Heart left ventricle (tissue), 16 donors: ENCODE measurements at regions of chr11 and their contacts with region 1.

Region 1: DNA sequence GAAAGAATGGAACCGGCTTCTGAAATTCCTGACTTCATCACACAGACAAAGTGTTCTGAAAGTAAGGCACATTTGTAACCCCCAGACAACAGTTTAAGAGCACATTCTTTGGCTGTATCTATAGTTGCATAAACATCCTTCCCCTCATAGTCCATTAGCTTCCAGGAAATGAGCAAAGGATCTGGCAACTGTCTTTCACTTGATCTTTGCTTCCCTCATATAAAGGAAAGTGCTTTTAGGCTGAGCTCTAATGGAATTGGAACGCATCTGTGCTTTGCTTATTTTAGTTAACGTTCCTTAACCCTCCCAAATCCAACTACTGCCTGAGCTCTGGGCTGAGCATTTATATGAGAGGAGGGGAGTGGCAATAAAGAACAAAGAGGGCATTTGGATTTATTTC is 76.9 kb upstream of the API5 start:
- DNase-seq: no peak
- ATAC-seq: no peak
- H3K4me3 ChIP-seq: no peak overlapping the region
- H3K27ac ChIP-seq: no peak overlapping the region
- H3K4me1 ChIP-seq: no peaks in the 10 kb centered on the region
- H3K27me3 ChIP-seq: no peaks in the 10 kb centered on the region
- CTCF ChIP-seq: no peak
- POLR2A ChIP-seq: no peak

Region 2: DNA sequence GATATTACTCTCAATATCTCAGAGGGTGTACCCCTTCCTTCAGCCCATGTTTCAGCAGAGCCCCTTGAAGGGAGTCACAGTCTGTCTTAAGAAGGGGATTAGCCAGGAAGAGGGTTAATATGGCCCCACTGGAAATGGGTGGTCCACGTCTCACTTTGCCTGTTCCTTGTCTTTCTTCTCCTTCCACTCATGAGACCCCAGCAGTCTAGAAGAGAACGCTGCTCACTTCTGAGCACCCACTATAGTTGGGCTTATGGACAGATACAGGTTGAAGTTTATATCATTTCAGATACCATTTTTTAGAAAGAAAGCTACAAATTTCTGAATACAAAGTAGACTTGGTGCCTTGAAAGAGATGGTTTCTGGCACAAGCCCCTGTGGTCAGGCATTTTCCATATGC is 62.4 kb before region 1 on chr11:
- intact Hi-C with region 1: loop called in 1 of 10 experiments (anchors 10 kb)
- DNase-seq: no peak
- ATAC-seq: no peak
- H3K4me3 ChIP-seq: no peak overlapping the region
- H3K27ac ChIP-seq: no peak overlapping the region
- H3K4me1 ChIP-seq: no peaks in the 10 kb centered on the region
- H3K27me3 ChIP-seq: peaks cover 0 to 6% (median 0%) of the 10 kb centered on the region in 9 donors
- CTCF ChIP-seq: no peak
- POLR2A ChIP-seq: no peak